HepG2 (cell line): ENCODE measurements at regions of chr21 and their contacts with region 1.

Region 1: GRCh38 chr21:32834916-32835235 is 63.3 kb upstream of the PAXBP1 start:
- DNase-seq: no peak
- ATAC-seq: no peak
- H3K4me3 ChIP-seq: no peak overlapping the region
- H3K27ac ChIP-seq: no peak overlapping the region
- H3K4me1 ChIP-seq: 0 out of 2 replicates have a peak, but pooled peaks cover 7% of the 10 kb centered on the region
- H3K27me3 ChIP-seq: peaks cover 0 to 5% of the 10 kb centered on the region in 2 experiments; a peak in 1 of 5 replicates
- CTCF ChIP-seq: no peak
- EP300 ChIP-seq: no peak
- POLR2A ChIP-seq: no peak
- RAD21 ChIP-seq: no peak

Region 2: GRCh38 chr21:32916522-32917099 is 81.7 kb after region 1 on chr21:
- CTCF ChIA-PET with region 1: no interaction called
- POLR2A ChIA-PET with region 1: no interaction called
- in situ Hi-C with region 1: no loop called
- intact Hi-C with region 1: loop called (anchors 2 kb)
- DNase-seq: peak; percentile 35
- ATAC-seq: peak; percentile 87
- H3K4me3 ChIP-seq: no peak overlapping the region
- H3K27ac ChIP-seq: no peak overlapping the region
- H3K4me1 ChIP-seq: peaks cover 7% of the 10 kb centered on the region; the same call in 1 of the 2 replicates
- H3K27me3 ChIP-seq: peaks cover 0 to 9% of the 10 kb centered on the region in 2 experiments; a peak in 3 of 5 replicates
- CTCF ChIP-seq: peak; percentile 48
- EP300 ChIP-seq: no peak
- POLR2A ChIP-seq: no peak
- RAD21 ChIP-seq: no peak